ENCODE measurements at regions of chrX and their contacts with region 1.

Region 1: GRCh38 chrX:154051201-154051810 is 31.6 kb upstream of the IRAK1 start:
- DNase-seq: peak; percentile 43 to 80 (median 70)
- ATAC-seq: peak; percentile 85
- H3K4me3 ChIP-seq: no peak overlapping the region
- H3K4me3 Mint-ChIP-seq: no peak overlapping the region
- H3K27ac ChIP-seq: peak overlapping the region in 1 of 2 experiments; percentile 25
- H3K27ac Mint-ChIP-seq: peak overlapping the region; percentile 62
- H3K4me1 ChIP-seq: peaks cover 18% of the 10 kb centered on the region
- H3K4me1 Mint-ChIP-seq: peaks cover 41% of the 10 kb centered on the region
- H3K27me3 ChIP-seq: no peaks in the 10 kb centered on the region
- H3K27me3 Mint-ChIP-seq: no peaks in the 10 kb centered on the region
- CTCF ChIP-seq: peak; percentile 55

Region 2: DNA sequence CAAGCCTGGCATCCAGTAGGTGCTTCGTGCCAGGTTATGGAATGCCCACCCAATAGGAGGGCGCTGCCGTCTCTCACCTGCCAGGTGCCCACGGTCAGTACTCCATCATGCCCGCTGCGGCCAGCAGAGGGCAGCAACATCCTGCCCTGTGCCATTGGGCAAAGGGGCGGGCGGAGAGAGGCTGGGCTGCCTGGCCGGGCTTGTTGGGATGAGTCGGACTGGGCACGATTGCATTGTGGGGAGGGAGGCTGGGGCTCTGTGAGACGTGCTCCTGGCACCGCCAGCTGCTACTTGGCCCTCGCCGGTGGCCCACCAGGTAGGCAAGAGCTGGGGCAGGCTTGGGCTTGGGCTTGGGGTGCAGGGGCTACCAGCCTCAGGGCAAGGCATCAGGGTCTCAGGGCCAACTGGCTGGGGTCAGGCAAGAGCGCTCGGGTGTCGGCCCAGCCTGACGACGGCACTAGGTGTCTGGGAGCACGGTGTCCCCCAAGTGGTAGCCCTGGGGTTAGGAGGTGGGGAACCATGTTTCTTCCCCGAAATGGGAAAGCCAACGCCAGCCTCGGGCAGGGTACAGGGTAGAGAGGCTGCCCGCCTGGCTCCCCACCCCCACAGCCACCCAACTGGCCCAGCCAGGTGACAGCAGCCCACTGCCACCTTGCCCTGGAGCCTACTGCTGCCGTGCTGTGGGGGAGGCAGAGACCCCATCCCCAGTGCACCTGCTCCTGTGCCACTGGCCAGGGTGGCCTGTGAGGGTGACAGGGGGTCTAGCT is 287.1 kb before region 1 on chrX and contains the start of gene PLXNB3:
- CTCF ChIA-PET with region 1: no interaction called
- POLR2A ChIA-PET with region 1: no interaction called
- intact Hi-C with region 1: loop called in 1 of 2 experiments (anchors 5 kb)
- DNase-seq: peak; percentile 45 to 89 (median 70)
- ATAC-seq: peak; percentile 88
- H3K4me3 ChIP-seq: no peak within 1 kb of the TSS
- H3K4me3 Mint-ChIP-seq: no peak within 1 kb of the TSS
- H3K27ac ChIP-seq: no peak within 1 kb of the TSS
- H3K27ac Mint-ChIP-seq: no peak within 1 kb of the TSS
- H3K4me1 ChIP-seq: peaks cover 10% of the 10 kb centered on the region
- H3K4me1 Mint-ChIP-seq: peaks cover 10% of the 10 kb centered on the region
- H3K27me3 ChIP-seq: no peaks in the 10 kb centered on the region
- H3K27me3 Mint-ChIP-seq: no peaks in the 10 kb centered on the region
- CTCF ChIP-seq: peak; percentile 52
- total RNA-seq, gene PLXNB3: 0.35 to 0.50 TPM

Region 3: DNA sequence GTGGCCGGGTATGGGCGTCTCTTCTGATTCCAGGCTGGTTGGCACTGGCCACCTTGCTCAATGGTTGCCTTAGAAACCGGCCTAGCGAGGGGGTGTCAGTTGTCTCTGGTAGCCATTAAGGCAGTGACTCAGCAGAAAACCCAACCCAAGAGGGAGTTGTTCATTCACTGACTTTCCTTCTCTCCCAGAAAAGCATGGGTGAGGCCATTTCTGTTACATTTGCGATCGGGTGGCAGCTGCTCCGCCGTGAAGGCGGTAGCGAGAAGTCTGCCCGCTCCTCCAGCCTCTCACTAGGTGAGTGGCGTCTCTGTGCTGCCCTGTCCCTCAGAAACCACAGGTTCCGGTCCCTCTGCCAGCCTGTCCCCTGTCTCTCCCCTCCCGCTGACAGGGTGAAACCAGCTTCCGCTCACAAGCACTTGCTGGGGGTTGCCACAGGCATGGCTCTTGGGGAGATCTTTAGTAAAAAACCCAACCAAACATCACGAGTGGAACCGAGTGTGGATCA is 49.0 kb before region 1 on chrX:
- CTCF ChIA-PET with region 1: no interaction called
- POLR2A ChIA-PET with region 1: no interaction called
- intact Hi-C with region 1: loop called in 1 of 2 experiments (anchors 10 kb)
- DNase-seq: peak in 7 of 9 experiments; percentile 31 to 80 (median 56)
- ATAC-seq: peak; percentile 83
- H3K4me3 ChIP-seq: peak overlapping the region; percentile 22 to 36
- H3K4me3 Mint-ChIP-seq: peak overlapping the region; percentile 81
- H3K27ac ChIP-seq: peak overlapping the region in 1 of 2 experiments; percentile 64
- H3K27ac Mint-ChIP-seq: peak overlapping the region; percentile 72
- H3K4me1 ChIP-seq: peaks cover 10% of the 10 kb centered on the region
- H3K4me1 Mint-ChIP-seq: peaks cover 12% of the 10 kb centered on the region
- H3K27me3 ChIP-seq: no peaks in the 10 kb centered on the region
- H3K27me3 Mint-ChIP-seq: no peaks in the 10 kb centered on the region
- CTCF ChIP-seq: no peak

Region 4: DNA sequence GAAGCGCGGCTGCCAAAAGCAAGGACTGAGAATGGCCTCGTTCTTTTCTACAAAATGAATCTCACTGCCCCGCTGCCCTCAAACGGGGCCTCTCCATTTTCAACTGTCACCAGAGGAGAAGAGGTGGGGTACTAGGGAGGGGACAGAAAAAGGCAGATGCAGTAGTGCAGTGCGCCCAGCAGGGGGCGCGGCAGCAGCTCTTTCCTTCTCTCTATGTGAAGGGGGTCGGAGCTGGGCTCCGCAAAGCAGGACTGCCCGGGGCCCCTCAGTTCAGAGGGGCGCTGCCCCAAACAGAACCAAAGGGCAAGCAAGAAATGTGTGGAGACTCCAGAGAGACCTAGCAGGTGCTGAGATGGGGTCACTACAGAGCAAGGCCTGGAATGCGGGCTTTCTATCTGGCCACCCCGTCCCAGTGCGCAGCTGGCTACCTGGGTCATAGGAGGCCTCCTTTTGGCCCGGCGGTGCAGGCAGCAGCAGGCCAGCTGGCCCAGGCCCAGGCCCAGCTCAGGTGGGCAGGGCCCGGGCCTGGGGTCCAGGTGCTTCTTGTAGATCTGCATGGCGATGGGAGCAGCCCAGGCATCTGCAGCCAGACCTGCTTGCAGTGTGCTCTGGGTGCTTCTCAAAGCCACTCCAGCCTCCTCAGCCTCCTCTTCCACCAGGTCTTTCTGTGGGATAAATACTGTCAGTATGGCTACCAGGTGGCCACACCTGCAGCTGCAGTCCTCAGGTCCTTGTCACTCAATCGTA is 37.5 kb before region 1 on chrX:
- CTCF ChIA-PET with region 1: interaction called, 6 read pairs
- POLR2A ChIA-PET with region 1: no interaction called
- intact Hi-C with region 1: loop called (anchors 1 kb)
- DNase-seq: peak in 8 of 9 experiments; percentile 25 to 72 (median 58)
- ATAC-seq: peak; percentile 87
- H3K4me3 ChIP-seq: no peak overlapping the region
- H3K4me3 Mint-ChIP-seq: no peak overlapping the region
- H3K27ac ChIP-seq: no peak overlapping the region
- H3K27ac Mint-ChIP-seq: no peak overlapping the region
- H3K4me1 ChIP-seq: peaks cover 15% of the 10 kb centered on the region
- H3K4me1 Mint-ChIP-seq: peaks cover 19% of the 10 kb centered on the region
- H3K27me3 ChIP-seq: no peaks in the 10 kb centered on the region
- H3K27me3 Mint-ChIP-seq: no peaks in the 10 kb centered on the region
- CTCF ChIP-seq: peak; percentile 73

Region 5: DNA sequence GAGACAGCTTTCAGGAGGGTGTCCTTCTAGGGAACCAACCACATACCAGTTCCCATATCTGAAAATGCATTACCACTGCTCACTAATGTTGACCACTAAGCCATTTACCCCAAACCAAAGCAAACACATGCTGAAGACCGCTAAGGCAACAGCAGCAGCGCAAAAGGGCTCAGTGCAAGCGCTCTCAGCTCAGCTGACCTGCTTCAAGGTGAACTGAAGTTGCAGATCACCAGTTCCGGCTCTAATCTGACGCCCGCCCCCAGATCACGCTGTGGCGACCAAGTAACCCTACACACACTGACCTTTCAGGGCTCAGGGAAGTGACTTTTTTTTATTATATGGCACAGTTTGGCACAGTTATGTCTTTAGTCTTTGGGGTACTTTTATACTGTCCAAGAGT is 40.4 kb after region 1 on chrX:
- CTCF ChIA-PET with region 1: interaction called, 5 read pairs
- POLR2A ChIA-PET with region 1: no interaction called
- intact Hi-C with region 1: loop called in 1 of 2 experiments (anchors 5 kb)
- DNase-seq: peak in 4 of 9 experiments; percentile 14 to 46 (median 30)
- ATAC-seq: peak; percentile 9
- H3K4me3 ChIP-seq: no peak overlapping the region
- H3K4me3 Mint-ChIP-seq: peak overlapping the region; percentile 29
- H3K27ac ChIP-seq: peak overlapping the region; percentile 3 to 62
- H3K27ac Mint-ChIP-seq: peak overlapping the region; percentile 73
- H3K4me1 ChIP-seq: peaks cover 59% of the 10 kb centered on the region
- H3K4me1 Mint-ChIP-seq: peaks cover 65% of the 10 kb centered on the region
- H3K27me3 ChIP-seq: no peaks in the 10 kb centered on the region
- H3K27me3 Mint-ChIP-seq: no peaks in the 10 kb centered on the region
- CTCF ChIP-seq: no peak